ENCODE measurements at regions of chr15 and their contacts with region 1.

Region 1: DNA sequence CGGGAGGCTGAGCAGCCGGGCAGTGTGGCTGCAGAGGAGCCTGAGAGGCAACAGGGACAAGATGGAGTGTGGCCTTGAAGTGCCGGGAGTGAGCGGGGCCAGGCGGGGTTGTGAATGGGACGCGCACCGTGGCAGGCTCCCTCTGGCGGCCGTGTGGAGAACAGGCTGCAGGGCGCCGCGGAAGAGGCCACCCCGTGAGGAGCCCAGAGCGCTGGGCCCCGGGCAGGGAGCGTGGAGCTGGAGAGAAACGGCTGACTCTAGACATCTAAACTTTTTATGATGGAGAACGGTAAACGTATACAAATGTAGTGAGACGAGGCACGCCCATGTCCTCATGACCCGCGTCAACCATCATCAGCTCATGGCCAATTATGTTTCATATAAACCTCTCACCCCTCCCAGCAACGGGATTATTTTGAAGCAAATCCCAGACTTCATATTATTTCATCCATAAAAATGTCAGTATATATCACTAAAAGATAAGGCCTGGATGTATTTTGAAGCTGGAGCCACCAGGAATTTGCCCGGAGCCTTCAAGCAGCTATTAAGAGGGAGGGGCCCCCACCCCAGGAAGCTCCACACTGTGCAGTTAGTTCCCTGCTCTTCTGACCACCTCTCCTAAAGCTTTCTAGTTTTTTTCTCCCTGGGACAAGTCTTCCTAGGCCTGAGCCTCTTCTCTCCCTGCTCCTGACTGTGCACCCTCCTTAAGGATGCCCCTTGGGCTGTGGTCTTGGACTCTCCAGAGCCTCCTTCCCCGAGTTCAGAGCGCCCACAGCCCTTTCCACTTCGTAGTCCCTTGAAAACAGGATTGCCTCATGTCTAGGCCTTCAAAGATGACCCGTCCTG is 149.4 kb downstream of the SMAD6 start:
- DNase-seq: peak; percentile 76 to 87
- ATAC-seq: peak; percentile 93

Region 2: GRCh38 chr15:66603301-66604179 is 247.9 kb before region 1 on chr15:
- intact Hi-C with region 1: loop called in 1 of 2 experiments (anchors 5 kb)
- DNase-seq: peak; percentile 51 to 74
- ATAC-seq: peak; percentile 79

Region 3: GRCh38 chr15:66789029-66790025 is 62.1 kb before region 1 on chr15:
- intact Hi-C with region 1: loop called in 1 of 2 experiments (anchors 5 kb)
- DNase-seq: peak in 1 of 2 donors; percentile 36
- ATAC-seq: peak; percentile 72

Measured in left colon (tissue), 2 donors.